PC-9 (cell line): ENCODE measurements at regions of chr6 and their contacts with region 1.

Region 1: DNA sequence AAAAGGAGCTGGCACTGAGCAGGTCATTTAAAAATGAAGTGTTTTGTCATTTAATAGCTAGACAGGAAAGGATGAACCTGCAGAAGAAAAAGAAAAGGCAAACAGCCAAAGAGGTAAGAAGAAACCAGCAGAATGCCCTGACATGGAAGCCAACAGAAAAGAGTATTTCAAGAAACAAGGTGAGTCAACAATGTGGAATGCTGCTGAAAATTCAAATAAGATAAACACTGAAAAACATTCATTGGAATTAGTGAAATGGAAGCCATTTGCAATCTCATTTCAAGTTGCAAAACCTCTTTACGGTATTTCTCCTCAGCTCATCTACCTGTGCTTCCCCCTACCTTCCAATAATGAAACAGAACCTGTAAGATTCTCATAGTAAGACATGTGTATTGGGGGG is 59.6 kb downstream of the RWDD2A start:
- DNase-seq: peak in 1 of 2 experiments; percentile 3
- H3K4me3 ChIP-seq: no peak overlapping the region
- H3K27ac ChIP-seq: no peak overlapping the region
- H3K4me1 ChIP-seq: no peaks in the 10 kb centered on the region
- H3K27me3 ChIP-seq: no peaks in the 10 kb centered on the region
- CTCF ChIP-seq: no peak

Region 2: DNA sequence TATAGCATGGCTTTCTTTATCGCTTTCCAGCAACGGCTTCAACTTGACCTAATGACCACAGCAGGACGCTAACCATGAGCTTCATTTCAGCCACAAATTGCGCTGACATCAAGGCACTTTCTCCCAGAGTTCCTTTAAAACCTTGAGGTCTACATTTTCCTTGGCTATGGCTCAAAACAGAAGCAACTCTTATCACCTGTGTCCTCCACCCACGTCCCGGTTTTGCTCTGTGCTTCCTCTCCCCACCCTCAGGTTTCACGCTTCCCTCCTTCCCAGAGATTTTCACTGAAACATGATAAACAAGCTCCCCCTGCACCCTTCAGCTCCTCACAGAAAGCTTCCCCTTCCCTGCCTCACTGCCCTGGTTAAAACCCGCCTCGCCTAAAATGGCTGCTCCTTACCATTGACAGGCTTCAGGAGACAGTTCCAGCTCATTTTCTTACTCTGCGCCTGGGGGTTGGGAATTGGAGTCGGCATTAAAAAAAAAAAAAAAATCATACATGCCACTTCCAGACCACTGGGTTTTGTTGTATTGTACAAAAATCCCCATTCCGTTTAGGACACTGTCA is 416.6 kb before region 1 on chr6:
- CTCF ChIA-PET with region 1: no interaction called
- POLR2A ChIA-PET with region 1: no interaction called
- intact Hi-C with region 1: no loop called
- DNase-seq: no peak
- H3K4me3 ChIP-seq: no peak overlapping the region
- H3K27ac ChIP-seq: no peak overlapping the region
- H3K4me1 ChIP-seq: no peaks in the 10 kb centered on the region
- H3K27me3 ChIP-seq: no peaks in the 10 kb centered on the region
- CTCF ChIP-seq: no peak

Region 3: DNA sequence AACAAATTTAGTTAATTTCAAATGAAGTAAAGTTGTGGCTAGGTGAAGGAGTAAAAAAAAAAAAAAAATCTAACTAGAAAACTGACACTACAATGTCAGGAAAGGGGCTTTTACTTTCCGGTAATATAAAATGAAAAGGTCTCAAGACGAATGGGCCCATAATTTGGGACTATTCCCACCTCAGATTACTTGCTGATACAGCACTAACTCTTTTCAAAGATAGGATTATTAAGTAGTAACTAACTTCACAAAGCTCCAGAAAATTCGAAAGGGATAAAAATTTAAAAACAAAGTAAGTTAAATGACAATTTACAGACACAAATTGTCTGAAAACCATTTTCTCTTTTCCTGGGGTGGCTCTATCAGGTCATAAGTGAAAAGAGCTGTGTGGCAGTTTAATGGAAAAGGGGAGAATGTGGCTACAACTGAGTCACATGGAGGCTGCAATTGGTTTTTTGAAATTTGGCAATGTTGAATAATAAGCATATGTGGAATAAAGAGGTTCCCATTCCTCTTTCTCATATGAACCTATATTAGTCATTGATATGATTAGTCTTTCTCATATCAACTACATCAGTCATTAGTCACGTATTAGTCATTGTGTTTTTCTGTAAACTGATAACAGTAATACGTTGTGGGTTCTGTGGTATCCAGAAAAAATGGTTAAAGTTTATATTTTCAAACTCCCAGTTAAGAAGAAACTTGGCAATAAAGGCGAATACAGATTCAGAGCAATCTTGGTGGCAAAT is 18.4 kb after region 1 on chr6:
- CTCF ChIA-PET with region 1: no interaction called
- POLR2A ChIA-PET with region 1: no interaction called
- intact Hi-C with region 1: loop called (anchors 2 kb)
- DNase-seq: peak in 1 of 2 experiments; percentile 76
- H3K4me3 ChIP-seq: no peak overlapping the region
- H3K27ac ChIP-seq: no peak overlapping the region
- H3K4me1 ChIP-seq: peaks cover 15% of the 10 kb centered on the region
- H3K27me3 ChIP-seq: no peaks in the 10 kb centered on the region
- CTCF ChIP-seq: no peak